ENCODE measurements at regions of chr15 and their contacts with region 1.

Region 1: DNA sequence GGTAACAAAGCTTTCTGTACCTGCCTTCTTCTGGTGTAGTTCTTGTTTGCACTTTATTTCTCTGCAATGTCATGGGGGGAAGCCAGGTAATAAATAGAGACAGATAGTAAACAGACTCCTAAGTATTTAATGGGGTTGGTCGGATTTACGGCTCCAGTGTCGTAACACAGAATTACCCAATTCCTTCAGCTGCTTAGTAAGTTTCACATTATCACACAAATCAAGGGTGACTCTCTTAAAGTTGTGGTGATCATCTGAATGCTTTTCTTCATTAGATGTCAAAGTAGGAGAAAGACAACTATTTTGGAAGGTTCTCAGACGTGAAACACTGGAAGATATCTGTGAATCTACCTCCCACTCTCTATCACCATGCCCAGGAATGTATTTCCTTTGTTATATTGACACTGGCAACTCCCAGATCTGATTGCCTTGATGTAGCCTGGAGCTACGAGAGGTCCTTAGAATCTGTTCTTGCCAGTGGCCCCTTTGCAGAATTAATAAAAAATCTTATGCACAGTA is 25.0 kb upstream of the TMC3 start:
- DNase-seq: no peak
- ATAC-seq: peak; percentile 36
- H3K4me3 ChIP-seq: no peak overlapping the region
- H3K27ac ChIP-seq: no peak overlapping the region
- H3K4me1 ChIP-seq: no peaks in the 10 kb centered on the region
- H3K27me3 ChIP-seq: no peaks in the 10 kb centered on the region
- CTCF ChIP-seq: no peak

Region 2: DNA sequence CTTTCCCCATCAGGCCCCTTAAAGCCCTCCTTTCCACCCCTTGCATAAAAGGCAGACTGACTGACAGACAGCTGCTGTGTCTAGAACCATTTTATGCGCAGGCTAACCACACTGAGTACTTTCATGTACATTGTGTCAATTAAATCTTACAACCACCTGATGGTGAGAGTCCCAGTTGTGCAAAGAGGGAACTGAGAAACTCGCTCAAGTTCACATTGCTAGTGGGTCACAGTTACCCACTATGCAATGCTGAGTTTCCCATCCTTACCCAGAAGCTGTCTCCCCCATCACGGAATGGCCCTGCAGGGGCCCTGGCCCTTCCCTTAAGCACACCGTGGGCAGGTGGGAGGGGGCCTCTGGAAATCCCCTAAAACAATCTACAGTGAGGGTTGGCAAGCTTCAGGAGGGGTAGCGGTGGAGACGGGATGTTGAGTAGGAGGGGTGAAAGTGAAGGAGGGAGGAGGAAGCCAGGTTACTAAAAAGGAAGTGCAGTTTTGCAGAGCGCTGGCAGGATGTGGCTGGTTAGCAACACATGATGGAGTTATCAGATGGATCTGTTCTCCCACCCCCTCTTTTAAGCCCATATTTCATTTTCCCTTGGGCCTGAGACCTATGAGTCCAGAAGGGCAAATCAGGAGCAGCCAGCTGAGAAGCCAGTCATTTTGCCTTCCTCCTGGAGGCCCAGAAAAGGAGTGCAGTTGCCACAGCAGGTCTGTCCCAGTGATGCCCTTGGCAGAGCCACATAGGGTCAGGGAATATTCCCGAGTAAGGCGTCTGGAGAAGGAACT is 105.1 kb before region 1 on chr15:
- intact Hi-C with region 1: no loop called
- DNase-seq: no peak
- ATAC-seq: peak; percentile 68
- H3K4me3 ChIP-seq: peak overlapping the region; percentile 11
- H3K27ac ChIP-seq: peak overlapping the region; percentile 79
- H3K4me1 ChIP-seq: peaks cover 40% of the 10 kb centered on the region
- H3K27me3 ChIP-seq: no peaks in the 10 kb centered on the region
- CTCF ChIP-seq: no peak

Region 3: GRCh38 chr15:81336568-81336967 is 62.5 kb before region 1 on chr15:
- intact Hi-C with region 1: loop called (anchors 10 kb)
- DNase-seq: no peak
- ATAC-seq: peak; percentile 24
- H3K4me3 ChIP-seq: no peak overlapping the region
- H3K27ac ChIP-seq: no peak overlapping the region
- H3K4me1 ChIP-seq: no peaks in the 10 kb centered on the region
- H3K27me3 ChIP-seq: no peaks in the 10 kb centered on the region
- CTCF ChIP-seq: peak; percentile 36